ENCODE measurements at regions of chr3 and their contacts with region 1.

Region 1: DNA sequence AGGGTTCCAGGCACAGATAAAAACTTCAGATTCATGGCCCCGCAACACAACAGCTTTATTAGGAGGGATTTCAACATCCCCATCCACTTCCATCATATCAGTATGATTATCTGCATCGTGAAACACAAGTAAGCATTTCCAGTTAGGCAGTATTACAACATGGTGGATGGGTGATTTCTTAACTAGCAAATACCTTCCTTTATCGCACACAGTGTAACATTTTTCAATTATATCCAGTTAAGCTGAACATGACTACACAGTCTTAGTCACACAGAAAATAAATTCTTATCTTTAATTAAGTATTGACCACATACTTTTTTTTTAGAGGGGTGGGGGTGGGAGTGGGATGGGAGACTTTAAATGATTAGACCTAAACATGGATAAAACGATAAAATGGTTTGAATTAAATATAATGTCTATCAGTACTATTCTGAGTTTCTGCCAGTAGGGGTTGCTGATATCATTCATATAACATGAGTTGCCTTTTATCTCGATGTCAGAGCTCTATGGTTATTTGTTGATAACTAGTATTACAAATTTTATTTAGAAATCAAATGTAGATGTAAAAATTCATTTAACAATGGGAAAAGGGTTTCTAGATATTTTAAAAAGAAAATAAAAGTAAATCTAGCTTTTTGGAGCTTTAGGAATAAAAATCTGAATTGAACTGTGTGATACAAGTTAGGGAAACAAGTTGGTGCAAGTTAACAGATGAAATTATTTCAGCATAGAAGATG is 146.6 kb downstream of the TBL1XR1 start:
- DNase-seq: peak in 7 of 9 donors; percentile 35 to 67 (median 52)
- ATAC-seq: peak; percentile 87
- H3K4me3 ChIP-seq: no peak overlapping the region
- H3K4me3 Mint-ChIP-seq: no peak overlapping the region
- H3K27ac ChIP-seq: no peak overlapping the region
- H3K27ac Mint-ChIP-seq: peak overlapping the region in 4 of 9 donors; percentile 17 to 56 (median 32)
- H3K4me1 ChIP-seq: peaks cover 0 to 6% of the 10 kb centered on the region in 2 donors
- H3K4me1 Mint-ChIP-seq: peaks cover 0 to 23% (median 18%) of the 10 kb centered on the region in 7 donors
- H3K27me3 ChIP-seq: no peaks in the 10 kb centered on the region
- H3K27me3 Mint-ChIP-seq: no peaks in the 10 kb centered on the region

Region 2: GRCh38 chr3:176872771-176873209 is 177.9 kb before region 1 on chr3:
- CTCF ChIA-PET with region 1: no interaction called
- POLR2A ChIA-PET with region 1: no interaction called
- intact Hi-C with region 1: loop called in 1 of 2 experiments (anchors 5 kb)
- DNase-seq: peak; percentile 10 to 61 (median 39)
- ATAC-seq: peak; percentile 83
- H3K4me3 ChIP-seq: no peak overlapping the region
- H3K4me3 Mint-ChIP-seq: no peak overlapping the region
- H3K27ac ChIP-seq: no peak overlapping the region
- H3K27ac Mint-ChIP-seq: peak overlapping the region in 3 of 9 donors; percentile 8 to 63 (median 26)
- H3K4me1 ChIP-seq: no peaks in the 10 kb centered on the region
- H3K4me1 Mint-ChIP-seq: peaks cover 0 to 9% (median 6%) of the 10 kb centered on the region in 7 donors
- H3K27me3 ChIP-seq: no peaks in the 10 kb centered on the region
- H3K27me3 Mint-ChIP-seq: peaks cover 0 to 11% (median 3%) of the 10 kb centered on the region in 5 donors

Region 3: DNA sequence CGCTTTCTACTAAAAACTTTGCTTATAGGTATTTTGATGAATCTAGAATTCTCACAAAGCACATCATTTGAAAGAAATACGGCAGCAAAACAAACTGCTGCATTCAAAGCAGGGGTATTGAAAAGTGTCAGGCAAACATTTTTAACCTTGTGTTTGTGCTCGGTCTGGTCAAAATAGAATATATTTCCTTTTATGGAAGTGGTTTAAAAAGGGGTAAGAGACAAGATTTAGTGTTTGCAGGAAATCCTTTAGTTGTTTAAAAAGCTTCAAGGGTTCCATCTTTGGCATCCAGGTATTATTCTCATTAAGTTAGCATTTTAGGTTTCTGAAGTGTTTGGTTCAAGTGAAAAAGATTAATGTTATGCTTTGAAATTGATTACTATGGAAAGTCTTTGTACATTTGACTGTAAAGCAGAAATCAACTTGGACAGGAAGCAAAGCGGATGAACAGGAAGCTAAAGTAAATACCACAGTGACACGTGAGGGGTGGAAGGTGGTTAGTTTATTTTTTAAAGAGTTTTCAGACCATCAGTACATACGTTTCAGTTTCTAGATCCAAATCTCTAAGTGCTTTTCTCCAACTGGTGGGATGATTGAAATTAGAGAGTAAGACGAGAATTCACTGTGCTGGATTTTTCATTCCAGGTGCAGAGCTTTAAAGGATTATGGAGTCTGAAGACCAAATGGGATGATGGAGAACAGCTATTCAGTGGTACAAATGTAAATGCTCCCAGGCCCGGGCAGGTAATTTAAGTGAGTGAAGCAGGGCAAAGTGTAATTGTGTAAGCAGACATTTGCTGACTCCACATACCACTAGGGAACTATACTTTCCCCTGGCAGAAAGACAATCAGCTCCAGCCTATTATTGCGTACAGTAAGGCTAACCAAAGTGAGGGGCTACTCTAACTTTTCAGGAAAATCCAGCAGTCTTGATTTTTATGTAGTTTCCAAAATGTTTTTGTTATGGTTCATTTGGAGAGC is 488.4 kb after region 1 on chr3:
- CTCF ChIA-PET with region 1: no interaction called
- POLR2A ChIA-PET with region 1: no interaction called
- intact Hi-C with region 1: loop called in 1 of 2 experiments (anchors 10 kb)
- DNase-seq: peak in 6 of 9 donors; percentile 15 to 52 (median 40)
- ATAC-seq: peak; percentile 74
- H3K4me3 ChIP-seq: peak overlapping the region; percentile 32
- H3K4me3 Mint-ChIP-seq: peak overlapping the region; percentile 58 to 81 (median 78)
- H3K27ac ChIP-seq: no peak overlapping the region
- H3K27ac Mint-ChIP-seq: peak overlapping the region; percentile 70 to 84 (median 81)
- H3K4me1 ChIP-seq: peaks cover 32 to 36% of the 10 kb centered on the region in 2 donors
- H3K4me1 Mint-ChIP-seq: peaks cover 21 to 67% (median 47%) of the 10 kb centered on the region in 7 donors
- H3K27me3 ChIP-seq: no peaks in the 10 kb centered on the region
- H3K27me3 Mint-ChIP-seq: no peaks in the 10 kb centered on the region

Region 4: DNA sequence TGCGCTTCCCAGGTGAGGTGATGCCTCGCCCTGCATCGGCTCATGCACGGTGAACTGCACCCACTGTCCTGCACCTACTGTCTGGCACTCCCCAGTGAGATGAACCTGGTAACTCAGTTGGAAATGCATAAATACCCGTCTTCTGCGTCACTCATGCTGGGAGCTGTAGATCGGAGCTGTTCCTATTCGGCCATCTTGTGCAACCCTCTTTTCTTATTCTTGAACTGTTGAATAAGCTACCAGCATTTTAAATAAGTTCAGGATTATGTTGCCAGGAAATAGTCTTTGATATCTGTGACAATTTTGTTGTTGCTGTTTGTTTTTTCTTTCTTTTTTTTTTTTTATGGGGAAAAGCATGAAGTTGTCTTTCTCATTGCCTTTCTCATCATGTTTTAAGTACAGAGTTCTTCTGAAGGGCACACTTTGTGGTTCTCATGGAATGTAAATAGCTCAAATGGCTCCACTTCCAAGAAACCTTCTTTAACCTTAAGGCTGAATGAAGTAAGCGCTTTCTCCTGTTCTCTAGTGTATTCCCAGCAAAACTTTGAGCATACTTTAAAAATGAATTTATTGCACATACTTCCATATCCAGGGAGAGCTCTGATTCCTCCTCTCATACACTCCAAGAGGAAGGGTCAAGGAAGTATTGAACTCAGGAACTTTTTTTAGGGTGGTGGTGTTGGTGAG is 614.6 kb after region 1 on chr3:
- CTCF ChIA-PET with region 1: no interaction called
- POLR2A ChIA-PET with region 1: no interaction called
- intact Hi-C with region 1: loop called (anchors 5 kb)
- DNase-seq: no peak
- ATAC-seq: no peak
- H3K4me3 ChIP-seq: no peak overlapping the region
- H3K4me3 Mint-ChIP-seq: no peak overlapping the region
- H3K27ac ChIP-seq: no peak overlapping the region
- H3K27ac Mint-ChIP-seq: peak overlapping the region in 1 of 9 donors; percentile 17
- H3K4me1 ChIP-seq: no peaks in the 10 kb centered on the region
- H3K4me1 Mint-ChIP-seq: peaks cover 0 to 5% (median 0%) of the 10 kb centered on the region in 7 donors
- H3K27me3 ChIP-seq: no peaks in the 10 kb centered on the region
- H3K27me3 Mint-ChIP-seq: no peaks in the 10 kb centered on the region

Region 5: GRCh38 chr3:177777699-177778098 is 727.0 kb after region 1 on chr3:
- CTCF ChIA-PET with region 1: interaction called, 3 read pairs
- POLR2A ChIA-PET with region 1: no interaction called
- intact Hi-C with region 1: loop called (anchors 1 to 5 kb)
- DNase-seq: peak in 5 of 9 donors; percentile 10 to 35 (median 26)
- ATAC-seq: peak; percentile 65
- H3K4me3 ChIP-seq: no peak overlapping the region
- H3K4me3 Mint-ChIP-seq: peak overlapping the region in 1 of 10 donors; percentile 16
- H3K27ac ChIP-seq: no peak overlapping the region
- H3K27ac Mint-ChIP-seq: peak overlapping the region in 3 of 9 donors; percentile 21 to 55 (median 29)
- H3K4me1 ChIP-seq: peaks cover 9 to 18% of the 10 kb centered on the region in 2 donors
- H3K4me1 Mint-ChIP-seq: peaks cover 13 to 20% (median 15%) of the 10 kb centered on the region in 7 donors
- H3K27me3 ChIP-seq: no peaks in the 10 kb centered on the region
- H3K27me3 Mint-ChIP-seq: no peaks in the 10 kb centered on the region

Region 6: GRCh38 chr3:178155521-178155920 is 1104.9 kb after region 1 on chr3:
- CTCF ChIA-PET with region 1: interaction called, 10 read pairs
- POLR2A ChIA-PET with region 1: no interaction called
- intact Hi-C with region 1: loop called in 1 of 2 experiments (anchors 1 kb)
- DNase-seq: no peak
- ATAC-seq: no peak
- H3K4me3 ChIP-seq: no peak overlapping the region
- H3K4me3 Mint-ChIP-seq: no peak overlapping the region
- H3K27ac ChIP-seq: no peak overlapping the region
- H3K27ac Mint-ChIP-seq: no peak overlapping the region
- H3K4me1 ChIP-seq: no peaks in the 10 kb centered on the region
- H3K4me1 Mint-ChIP-seq: peaks cover 0 to 11% (median 5%) of the 10 kb centered on the region in 7 donors
- H3K27me3 ChIP-seq: no peaks in the 10 kb centered on the region
- H3K27me3 Mint-ChIP-seq: peaks cover 0 to 3% (median 0%) of the 10 kb centered on the region in 5 donors

Region 7: GRCh38 chr3:178385280-178385952 is 1334.7 kb after region 1 on chr3:
- CTCF ChIA-PET with region 1: interaction called, 4 read pairs
- POLR2A ChIA-PET with region 1: no interaction called
- intact Hi-C with region 1: loop called (anchors 1 to 10 kb)
- DNase-seq: peak in 5 of 9 donors; percentile 23 to 44 (median 41)
- ATAC-seq: peak; percentile 56
- H3K4me3 ChIP-seq: no peak overlapping the region
- H3K4me3 Mint-ChIP-seq: no peak overlapping the region
- H3K27ac ChIP-seq: no peak overlapping the region
- H3K27ac Mint-ChIP-seq: peak overlapping the region in 1 of 9 donors; percentile 4
- H3K4me1 ChIP-seq: no peaks in the 10 kb centered on the region
- H3K4me1 Mint-ChIP-seq: no peaks in the 10 kb centered on the region
- H3K27me3 ChIP-seq: no peaks in the 10 kb centered on the region
- H3K27me3 Mint-ChIP-seq: peaks cover 0 to 12% (median 4%) of the 10 kb centered on the region in 5 donors